ENCODE measurements at regions of chr1 and their contacts with region 1.

Region 1: DNA sequence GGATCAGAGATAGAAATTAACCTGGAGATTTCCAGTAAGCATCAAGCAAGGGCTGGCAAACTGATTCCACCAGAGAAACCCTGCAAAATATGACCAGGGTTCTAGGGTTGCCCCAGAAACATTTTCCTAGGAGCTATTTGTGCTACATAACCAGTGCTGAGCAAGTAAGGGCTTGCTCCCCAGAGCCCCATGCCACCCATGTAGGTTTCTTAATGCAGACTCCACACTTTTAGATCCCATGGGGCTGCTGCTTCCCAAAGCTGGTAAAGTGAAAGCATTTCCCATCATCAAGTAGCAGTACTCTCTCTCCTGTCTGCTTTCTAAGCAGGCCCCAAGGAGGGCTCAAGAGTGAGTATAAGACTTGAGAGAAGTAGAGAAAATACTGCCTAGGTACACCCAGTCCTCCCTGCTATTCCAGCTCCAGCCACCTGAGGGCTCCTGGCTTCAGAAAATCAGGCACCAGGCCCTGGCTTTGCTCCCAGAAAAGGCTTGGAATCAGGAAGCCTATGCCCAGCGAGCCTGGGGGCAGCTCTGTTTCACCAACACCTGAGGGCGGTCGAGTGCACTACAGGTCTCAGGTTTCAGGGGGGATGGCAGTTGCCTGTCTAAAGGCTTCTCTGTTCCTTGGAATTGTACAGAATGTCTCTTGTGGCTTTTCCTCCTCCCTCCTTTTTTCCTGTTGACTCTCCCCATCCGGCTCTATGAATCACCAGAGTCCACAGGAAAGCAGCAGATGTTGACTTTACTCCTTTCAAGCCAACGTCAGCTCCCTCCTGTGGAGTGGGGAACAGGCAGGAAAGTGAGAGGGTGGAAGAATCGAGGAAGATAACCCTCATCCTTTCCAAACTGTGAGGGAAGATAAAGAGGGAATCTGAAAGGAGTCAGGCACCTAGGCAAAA is 6.2 kb upstream of the ANKRD35 start:
- DNase-seq: peak; percentile 94 to 96
- H3K4me3 ChIP-seq: peak overlapping the region in 3 of 4 experiments; percentile 2 to 48 (median 3); a peak in 4 of 8 replicates
- H3K27ac ChIP-seq: no peak overlapping the region
- H3K4me1 ChIP-seq: peaks cover 0 to 6% (median 4%) of the 10 kb centered on the region in 4 experiments; a peak in 3 of 7 replicates
- H3K27me3 ChIP-seq: no peaks in the 10 kb centered on the region
- CTCF ChIP-seq: peak; percentile 84 to 99 (median 99)
- EP300 ChIP-seq: no peak
- POLR2A ChIP-seq: peak in 1 of 2 experiments; percentile 27; a peak in 1 of 3 replicates
- RAD21 ChIP-seq: peak; percentile 96 to 99

Region 2: DNA sequence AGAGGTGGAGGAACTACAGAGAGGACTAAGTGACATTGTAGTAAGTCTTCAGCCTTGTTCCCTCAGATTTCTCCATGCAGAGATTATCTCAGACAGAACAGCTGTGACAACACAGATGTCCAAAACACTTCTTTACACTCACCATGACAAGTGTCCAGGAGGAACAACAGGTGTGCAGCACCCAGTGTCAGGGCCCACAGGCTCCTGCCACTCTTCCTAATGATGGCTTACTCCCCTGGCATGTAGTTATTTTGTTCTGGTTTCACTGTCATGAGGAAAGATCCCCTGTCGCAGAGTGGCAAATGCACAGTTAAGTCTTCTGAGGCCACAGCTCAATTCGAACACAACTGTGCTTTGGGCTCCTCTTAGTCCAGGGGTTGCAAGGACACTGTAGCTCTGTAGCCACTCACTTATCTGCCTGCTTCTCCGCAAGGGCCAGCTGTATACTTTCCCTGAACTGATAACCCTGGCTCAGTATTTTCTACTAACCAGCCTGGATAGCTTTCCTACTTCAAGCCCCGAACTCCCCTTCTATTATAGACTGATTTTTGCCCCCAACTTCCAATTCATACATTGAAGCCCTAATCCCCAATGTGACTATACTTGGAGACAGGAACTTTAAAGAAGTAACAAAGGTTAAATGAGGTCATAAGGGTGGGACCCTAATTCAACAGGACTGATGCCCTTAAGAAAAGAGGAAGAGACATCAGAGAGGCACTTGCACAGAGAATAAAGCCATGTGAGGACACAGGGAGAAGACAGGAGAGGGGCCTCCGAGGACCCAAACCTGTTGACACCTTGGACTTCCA is 195.8 kb before region 1 on chr1:
- CTCF ChIA-PET with region 1: no interaction called
- POLR2A ChIA-PET with region 1: no interaction called
- DNase-seq: no peak
- H3K4me3 ChIP-seq: no peak overlapping the region
- H3K27ac ChIP-seq: no peak overlapping the region
- H3K4me1 ChIP-seq: no peaks in the 10 kb centered on the region
- H3K27me3 ChIP-seq: peaks cover 0 to 2% (median 0%) of the 10 kb centered on the region in 4 experiments; a peak in 1 of 7 replicates
- CTCF ChIP-seq: no peak
- EP300 ChIP-seq: no peak
- POLR2A ChIP-seq: no peak
- RAD21 ChIP-seq: no peak

Region 3: DNA sequence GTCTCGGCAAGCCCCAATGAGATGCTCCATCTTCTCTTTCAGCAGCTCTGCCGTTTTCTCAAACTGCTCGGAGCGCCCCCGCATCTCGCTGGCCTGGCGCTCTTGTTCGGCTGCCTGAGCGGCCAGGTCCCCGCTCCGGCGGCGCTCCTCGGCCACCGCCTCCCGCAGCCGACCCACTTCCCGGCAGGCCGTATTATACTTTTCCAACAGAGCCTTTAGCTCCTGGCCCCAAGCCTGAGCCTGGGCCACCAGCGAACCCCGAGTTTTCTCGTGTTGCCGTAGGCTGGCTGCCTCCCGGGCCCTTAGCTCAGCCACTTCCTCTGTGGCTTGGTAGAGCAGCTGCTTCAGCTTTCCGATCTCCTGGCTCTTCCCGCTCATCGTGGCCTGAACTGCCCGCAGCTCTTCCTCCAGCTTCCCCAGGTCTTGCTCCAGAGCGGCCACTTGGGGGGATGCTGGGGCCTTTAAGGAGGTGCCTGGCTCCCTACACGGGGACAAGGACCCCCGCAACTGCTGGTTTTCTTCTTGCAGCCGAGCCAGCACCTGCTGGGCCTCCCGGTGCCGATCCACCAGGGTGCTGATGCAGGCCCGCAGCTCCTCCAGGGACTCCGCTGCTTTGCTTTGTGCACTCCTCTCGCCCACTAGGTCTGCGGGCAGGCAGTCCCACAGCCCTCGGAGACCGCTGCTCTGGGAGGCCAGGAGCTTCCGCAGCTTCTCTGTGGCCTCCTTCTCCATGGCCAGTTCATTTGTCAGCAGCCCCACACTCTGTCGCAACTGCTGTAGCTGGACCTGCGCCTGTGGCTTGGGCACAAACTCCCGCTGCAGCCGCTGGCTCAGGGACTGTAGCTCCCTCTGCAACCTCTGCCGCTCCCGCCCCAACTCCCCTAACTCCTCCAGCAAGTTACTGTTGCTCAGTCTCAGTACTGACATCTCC is 19.6 kb before region 1 on chr1:
- CTCF ChIA-PET with region 1: interaction called, 18 read pairs
- POLR2A ChIA-PET with region 1: interaction called, 6 read pairs
- DNase-seq: peak in 1 of 2 experiments; percentile 82
- H3K4me3 ChIP-seq: peak overlapping the region; percentile 36 to 62 (median 52)
- H3K27ac ChIP-seq: no peak overlapping the region
- H3K4me1 ChIP-seq: peaks cover 0 to 11% (median under 1%) of the 10 kb centered on the region in 4 experiments; a peak in 4 of 7 replicates
- H3K27me3 ChIP-seq: peaks cover 0 to 24% (median 12%) of the 10 kb centered on the region in 4 experiments; a peak in 6 of 7 replicates
- CTCF ChIP-seq: no peak
- EP300 ChIP-seq: no peak
- POLR2A ChIP-seq: 0 out of 3 replicates have a peak, but pooled peaks of 1 of the 2 experiments have one; percentile 19
- RAD21 ChIP-seq: no peak

Region 4: DNA sequence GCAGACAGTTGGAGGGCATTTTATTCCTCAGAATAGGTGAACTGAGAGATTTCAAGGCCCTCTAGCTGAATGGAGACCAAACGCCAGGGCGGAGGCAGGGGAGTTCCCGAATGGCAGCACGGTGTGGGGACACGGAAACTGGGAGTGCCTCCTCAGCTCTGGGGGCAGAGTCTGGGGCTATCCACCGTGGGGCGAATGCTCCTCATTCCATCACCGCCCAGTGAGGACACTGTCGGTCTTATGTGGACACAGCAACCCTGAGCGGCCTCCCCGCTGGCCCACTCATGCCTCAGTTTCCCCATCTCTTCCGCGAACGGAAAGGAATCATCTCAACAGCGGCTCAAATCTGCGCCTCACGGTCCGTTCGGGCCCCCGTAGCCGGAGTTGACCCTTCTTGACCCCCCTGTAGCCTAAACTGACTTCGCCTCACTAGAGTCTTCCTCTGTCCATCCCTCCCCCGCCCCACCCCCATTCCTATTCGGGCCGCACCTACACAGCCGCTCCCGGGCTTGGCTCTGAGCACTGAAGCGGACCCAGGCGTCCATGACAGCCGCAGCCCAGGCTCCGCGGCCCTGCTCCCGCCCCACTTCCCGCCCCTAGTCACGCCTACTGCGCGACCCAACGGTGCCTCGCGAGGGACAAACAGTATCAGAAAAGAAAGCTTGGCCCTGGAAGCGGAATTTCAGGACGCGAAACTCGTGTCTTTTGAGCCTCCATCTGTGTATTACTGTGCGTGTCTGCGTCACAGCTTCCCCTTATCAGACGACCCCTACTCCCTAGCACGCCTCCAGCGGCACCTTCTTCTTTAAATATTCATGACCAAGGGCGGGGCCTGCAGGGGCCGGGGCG is 26.5 kb after region 1 on chr1 and contains the start of gene PEX11B:
- CTCF ChIA-PET with region 1: interaction called, 146 read pairs
- POLR2A ChIA-PET with region 1: interaction called, 5 read pairs
- DNase-seq: peak in 1 of 2 experiments; percentile 92
- H3K4me3 ChIP-seq: peak within 1 kb of the TSS; percentile 71 to 96 (median 82)
- H3K27ac ChIP-seq: no peak within 1 kb of the TSS
- H3K4me1 ChIP-seq: peaks cover 0 to 6% (median 2%) of the 10 kb centered on the region in 4 experiments; a peak in 6 of 7 replicates
- H3K27me3 ChIP-seq: no peaks in the 10 kb centered on the region
- CTCF ChIP-seq: no peak
- EP300 ChIP-seq: no peak
- POLR2A ChIP-seq: 0 out of 3 replicates have a peak, but pooled peaks of 1 of the 2 experiments have one; percentile 11
- RAD21 ChIP-seq: no peak
- total RNA-seq, gene PEX11B: 8.1 and 9.1 TPM in 2 replicates

Region 5: GRCh38 chr1:145957443-145958319 is 65.8 kb after region 1 on chr1 and contains the start of gene LIX1L:
- CTCF ChIA-PET with region 1: interaction called, 14 read pairs
- POLR2A ChIA-PET with region 1: no interaction called
- DNase-seq: peak; percentile 83 to 93
- H3K4me3 ChIP-seq: peak within 1 kb of the TSS; percentile 42 to 67 (median 52)
- H3K27ac ChIP-seq: no peak within 1 kb of the TSS
- H3K4me1 ChIP-seq: peaks cover 0 to 15% (median 9%) of the 10 kb centered on the region in 4 experiments; a peak in 6 of 7 replicates
- H3K27me3 ChIP-seq: peaks cover 17 to 66% (median 52%) of the 10 kb centered on the region in 4 experiments
- CTCF ChIP-seq: no peak
- EP300 ChIP-seq: no peak
- POLR2A ChIP-seq: no peak
- RAD21 ChIP-seq: no peak; a peak in 1 of 4 replicates
- total RNA-seq, gene LIX1L: 2.9 and 3.0 TPM in 2 replicates

Region 6: GRCh38 chr1:146012737-146013403 is 121.0 kb after region 1 on chr1:
- CTCF ChIA-PET with region 1: interaction called, 17 read pairs
- POLR2A ChIA-PET with region 1: interaction called, 3 read pairs
- DNase-seq: no peak
- H3K4me3 ChIP-seq: no peak overlapping the region
- H3K27ac ChIP-seq: no peak overlapping the region
- H3K4me1 ChIP-seq: no peaks in the 10 kb centered on the region; a peak in 1 of 7 replicates
- H3K27me3 ChIP-seq: 0 out of 7 replicates have a peak, but pooled peaks cover 0 to under 1% (median 0%) of the 10 kb centered on the region in 4 experiments
- CTCF ChIP-seq: peak in 2 of 3 experiments; percentile 65 to 72; a peak in 3 of 4 replicates
- EP300 ChIP-seq: no peak
- POLR2A ChIP-seq: no peak
- RAD21 ChIP-seq: peak; percentile 87 to 91

Measured in H1 (cell line).